ENCODE measurements at regions of chr1 and their contacts with region 1.

Region 1: GRCh38 chr1:40774266-40774998 is 9.2 kb upstream of the KCNQ4 start:
- DNase-seq: peak; percentile 79
- H3K4me3 Mint-ChIP-seq: no peak overlapping the region
- H3K27ac Mint-ChIP-seq: no peak overlapping the region
- H3K4me1 Mint-ChIP-seq: no peaks in the 10 kb centered on the region
- H3K27me3 Mint-ChIP-seq: no peaks in the 10 kb centered on the region

Region 2: DNA sequence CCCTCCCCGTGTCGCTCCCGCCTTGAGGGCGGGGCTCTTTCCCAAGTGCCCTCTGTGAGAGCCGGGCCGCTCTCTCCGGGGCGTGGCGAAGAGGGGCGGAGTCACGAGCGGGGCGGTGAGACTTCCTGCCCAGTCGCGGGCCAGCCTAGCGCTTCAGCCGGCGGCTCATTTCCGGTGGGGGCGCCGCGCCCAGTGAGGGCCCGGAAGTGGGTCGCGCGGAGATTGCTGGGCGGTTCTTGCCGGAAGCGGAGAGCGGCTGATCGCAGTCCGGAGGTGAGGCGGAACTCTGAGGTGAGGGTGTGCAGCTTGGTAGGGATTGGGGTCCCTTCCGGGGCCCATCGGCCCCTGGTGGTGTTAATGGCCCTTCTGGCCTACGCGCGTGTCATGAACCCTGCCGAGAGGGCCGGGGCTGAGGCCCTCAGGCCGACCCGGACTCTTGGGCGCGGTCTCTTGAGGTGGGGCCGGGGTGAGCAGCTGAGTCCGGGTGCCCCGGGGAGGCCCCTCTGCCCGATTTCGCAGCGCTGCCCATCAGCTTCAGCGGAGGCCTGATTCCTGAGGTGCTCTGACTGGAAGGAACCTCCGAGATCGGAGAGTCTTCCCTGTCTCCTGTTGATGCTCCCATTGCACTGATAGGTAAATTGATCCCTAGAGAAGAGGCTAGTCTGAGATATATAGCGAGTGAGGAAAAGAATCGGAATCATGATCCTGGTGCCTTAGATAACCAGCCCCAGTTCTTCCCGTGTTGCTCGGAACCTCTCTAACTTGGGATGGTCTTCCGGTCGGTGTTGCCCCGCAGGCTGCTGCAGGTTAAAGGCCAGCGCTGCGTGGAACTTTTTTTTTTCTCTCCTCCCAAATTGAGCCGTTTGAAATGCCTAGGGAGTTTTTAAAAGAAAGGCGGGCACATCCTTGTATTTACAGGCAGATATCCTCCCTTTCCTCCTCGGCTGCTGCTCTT is 733.6 kb before region 1 on chr1 and contains the start of gene CAP1:
- CTCF ChIA-PET with region 1: no interaction called
- intact Hi-C with region 1: no loop called
- DNase-seq: peak; percentile 100
- H3K4me3 Mint-ChIP-seq: peak within 1 kb of the TSS; percentile 87
- H3K27ac Mint-ChIP-seq: peak within 1 kb of the TSS; percentile 98
- H3K4me1 Mint-ChIP-seq: peaks cover 61% of the 10 kb centered on the region
- H3K27me3 Mint-ChIP-seq: no peaks in the 10 kb centered on the region
- total RNA-seq, gene CAP1: 522 to 525 TPM

Region 3: DNA sequence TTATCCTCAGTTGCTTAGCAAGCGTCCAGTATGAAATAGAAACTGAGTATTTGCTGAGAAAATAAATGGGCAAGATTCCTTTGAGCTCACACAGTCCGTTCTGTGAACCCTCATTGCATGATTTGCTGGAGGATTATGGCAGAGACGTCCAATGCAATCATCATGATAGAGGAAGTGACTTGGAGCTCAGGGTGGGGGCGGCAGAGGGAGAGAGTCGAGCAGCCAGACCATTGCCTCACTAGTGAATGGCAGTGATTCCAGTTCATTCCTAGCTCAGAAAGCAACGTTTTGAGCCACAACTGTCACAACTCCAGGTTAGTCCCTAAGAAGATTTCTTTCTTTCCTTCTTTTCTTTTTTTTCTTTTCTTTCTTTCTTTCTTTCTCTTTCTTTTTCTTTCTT is 429.8 kb before region 1 on chr1:
- CTCF ChIA-PET with region 1: no interaction called
- intact Hi-C with region 1: no loop called
- DNase-seq: peak; percentile 80
- H3K4me3 Mint-ChIP-seq: peak overlapping the region; percentile 65
- H3K27ac Mint-ChIP-seq: peak overlapping the region; percentile 100
- H3K4me1 Mint-ChIP-seq: peaks cover 61% of the 10 kb centered on the region
- H3K27me3 Mint-ChIP-seq: no peaks in the 10 kb centered on the region

Region 4: DNA sequence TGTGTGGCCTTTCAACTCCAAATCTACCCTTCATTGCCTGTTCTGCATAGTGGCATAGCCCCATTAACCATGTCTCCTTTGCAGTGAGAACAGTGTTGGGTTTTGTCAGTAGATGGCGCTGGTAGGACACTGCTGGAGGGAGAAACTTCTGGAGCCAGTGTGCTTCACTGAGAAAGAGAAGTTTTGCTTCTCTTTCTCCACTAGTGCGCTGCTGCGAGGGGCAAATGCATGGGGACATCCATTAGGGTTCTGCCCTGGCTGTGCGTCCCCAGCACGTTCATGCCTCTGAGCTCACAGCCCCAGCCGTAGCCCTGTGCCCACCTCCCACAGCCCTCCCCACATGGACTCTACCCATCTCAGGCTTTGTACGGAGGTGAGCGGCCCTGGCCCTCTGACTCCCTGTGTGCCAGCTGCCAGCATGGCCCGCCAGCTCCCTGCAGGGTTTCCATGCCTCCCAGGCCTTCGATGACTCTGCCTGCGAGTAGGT is 162.0 kb before region 1 on chr1:
- CTCF ChIA-PET with region 1: interaction called, 6 read pairs
- intact Hi-C with region 1: loop called (anchors 2 kb)
- DNase-seq: peak; percentile 89
- H3K4me3 Mint-ChIP-seq: no peak overlapping the region
- H3K27ac Mint-ChIP-seq: no peak overlapping the region
- H3K4me1 Mint-ChIP-seq: no peaks in the 10 kb centered on the region
- H3K27me3 Mint-ChIP-seq: no peaks in the 10 kb centered on the region

Region 5: GRCh38 chr1:40755067-40755466 is 19.4 kb before region 1 on chr1:
- CTCF ChIA-PET with region 1: interaction called, 17 read pairs
- intact Hi-C with region 1: no loop called
- DNase-seq: no peak
- H3K4me3 Mint-ChIP-seq: no peak overlapping the region
- H3K27ac Mint-ChIP-seq: no peak overlapping the region
- H3K4me1 Mint-ChIP-seq: peaks cover 23% of the 10 kb centered on the region
- H3K27me3 Mint-ChIP-seq: no peaks in the 10 kb centered on the region

Region 6: GRCh38 chr1:40796939-40797667 is 22.7 kb after region 1 on chr1:
- CTCF ChIA-PET with region 1: interaction called, 12 read pairs
- intact Hi-C with region 1: no loop called
- DNase-seq: peak; percentile 36
- H3K4me3 Mint-ChIP-seq: peak overlapping the region; percentile 8
- H3K27ac Mint-ChIP-seq: peak overlapping the region; percentile 48
- H3K4me1 Mint-ChIP-seq: peaks cover 50% of the 10 kb centered on the region
- H3K27me3 Mint-ChIP-seq: no peaks in the 10 kb centered on the region

Region 7: GRCh38 chr1:40831001-40831732 is 56.7 kb after region 1 on chr1:
- CTCF ChIA-PET with region 1: interaction called, 12 read pairs
- intact Hi-C with region 1: no loop called
- DNase-seq: no peak
- H3K4me3 Mint-ChIP-seq: no peak overlapping the region
- H3K27ac Mint-ChIP-seq: no peak overlapping the region
- H3K4me1 Mint-ChIP-seq: peaks cover under 1% of the 10 kb centered on the region
- H3K27me3 Mint-ChIP-seq: no peaks in the 10 kb centered on the region

Region 8: DNA sequence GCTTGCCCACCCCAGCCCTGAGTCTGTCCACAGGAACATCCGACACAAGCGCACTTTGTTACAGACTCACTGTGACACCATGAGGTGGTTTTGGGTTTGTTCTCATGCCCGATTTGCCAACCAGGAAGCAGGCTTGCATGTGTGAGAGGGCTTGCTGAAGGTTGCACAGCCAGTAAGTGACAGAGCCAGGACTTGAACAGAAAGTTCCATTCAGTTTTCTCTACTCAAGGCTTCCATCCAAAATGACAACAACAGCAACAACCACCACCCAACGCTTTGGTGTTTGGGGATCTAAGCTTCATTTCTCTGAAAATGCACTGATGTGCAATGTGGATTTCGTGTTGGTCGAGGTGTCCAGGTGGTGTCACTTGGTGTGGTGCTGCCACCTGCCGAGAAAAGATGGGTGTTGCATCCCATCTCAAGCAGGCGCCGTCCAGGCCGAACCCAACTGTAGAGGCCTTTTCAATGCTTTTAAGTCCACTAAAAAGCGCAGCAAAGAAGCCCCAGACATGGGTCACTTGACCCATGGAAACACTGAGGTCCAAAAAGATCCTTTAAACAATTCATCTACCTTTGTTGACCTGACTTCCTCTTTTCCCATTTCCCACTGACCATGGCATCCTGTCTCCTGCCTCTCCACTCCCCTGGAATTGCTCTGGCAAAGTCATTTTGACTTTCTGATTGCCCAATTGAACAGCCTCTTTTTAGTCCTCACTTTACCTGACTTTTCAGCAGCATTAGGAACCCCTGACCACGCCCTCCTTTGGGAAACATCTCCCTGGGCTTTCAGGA is 75.6 kb after region 1 on chr1:
- CTCF ChIA-PET with region 1: interaction called, 115 read pairs
- intact Hi-C with region 1: loop called (anchors 1 kb)
- DNase-seq: peak; percentile 87
- H3K4me3 Mint-ChIP-seq: no peak overlapping the region
- H3K27ac Mint-ChIP-seq: no peak overlapping the region
- H3K4me1 Mint-ChIP-seq: peaks cover 8% of the 10 kb centered on the region
- H3K27me3 Mint-ChIP-seq: no peaks in the 10 kb centered on the region

Region 9: DNA sequence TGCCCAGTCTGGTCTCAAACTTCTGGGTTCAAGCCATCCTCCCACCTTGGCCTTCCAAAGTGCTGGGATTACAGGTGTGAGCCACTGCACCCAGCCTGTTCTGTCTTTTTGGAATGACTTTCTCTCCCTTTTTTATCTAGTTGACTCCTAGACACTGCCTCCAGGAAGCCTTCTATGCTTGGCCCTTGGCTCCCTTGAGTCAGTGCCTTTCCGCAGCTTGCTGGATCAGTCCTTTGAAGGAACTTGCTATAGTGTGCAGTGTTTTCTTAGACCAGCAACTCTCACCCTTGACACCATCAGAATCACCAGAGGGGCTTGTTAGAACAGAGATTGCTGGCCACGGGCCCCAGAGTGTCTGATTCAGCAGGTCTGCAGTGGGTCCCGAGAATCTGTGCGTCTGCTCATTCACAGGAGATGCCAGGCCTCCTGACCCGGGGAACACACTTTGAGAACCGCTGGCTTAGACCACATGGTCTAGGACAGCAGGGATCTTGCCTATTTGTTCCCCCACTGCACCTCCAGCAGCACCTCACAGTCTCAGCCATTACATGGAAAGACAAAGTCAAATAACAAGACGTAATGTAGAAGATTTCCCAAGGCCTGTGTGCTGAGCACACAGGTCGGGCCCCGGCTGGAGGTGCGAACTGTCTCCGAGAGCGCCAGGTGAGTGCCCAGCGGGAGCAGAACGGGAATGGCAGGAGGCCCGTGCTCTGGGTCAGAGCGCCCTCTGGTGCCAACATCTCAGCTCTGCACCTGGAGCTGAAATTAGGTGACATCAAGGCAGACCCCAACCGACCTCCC is 177.7 kb after region 1 on chr1:
- CTCF ChIA-PET with region 1: interaction called, 95 read pairs
- intact Hi-C with region 1: loop called (anchors 1 kb)
- DNase-seq: peak; percentile 69
- H3K4me3 Mint-ChIP-seq: no peak overlapping the region
- H3K27ac Mint-ChIP-seq: no peak overlapping the region
- H3K4me1 Mint-ChIP-seq: peaks cover 4% of the 10 kb centered on the region
- H3K27me3 Mint-ChIP-seq: peaks cover 18% of the 10 kb centered on the region